Activated CD8-positive, alpha-beta memory T cell treated with anti-CD3 and anti-CD28 coated beads, Interleukin-2, amount 10 ng/mL, durations not matched to agents 7 days and 5 days (primary cell): ENCODE measurements at regions of chr6 and their contacts with region 1.

Region 1: GRCh38 chr6:43263314-43264178 is 20.3 kb downstream of the TTBK1 start:
- DNase-seq: peak; percentile 85
- ATAC-seq: peak; percentile 96
- H3K4me3 Mint-ChIP-seq: no peak overlapping the region
- H3K27ac Mint-ChIP-seq: no peak overlapping the region
- H3K4me1 Mint-ChIP-seq: no peaks in the 10 kb centered on the region
- H3K27me3 Mint-ChIP-seq: peaks cover 10% of the 10 kb centered on the region

Region 2: GRCh38 chr6:43355862-43356590 is 92.5 kb after region 1 on chr6:
- CTCF ChIA-PET with region 1: interaction called, 10 read pairs
- DNase-seq: no peak
- ATAC-seq: no peak
- H3K4me3 Mint-ChIP-seq: no peak overlapping the region
- H3K27ac Mint-ChIP-seq: no peak overlapping the region
- H3K4me1 Mint-ChIP-seq: peaks cover 2% of the 10 kb centered on the region
- H3K27me3 Mint-ChIP-seq: no peaks in the 10 kb centered on the region

Region 3: DNA sequence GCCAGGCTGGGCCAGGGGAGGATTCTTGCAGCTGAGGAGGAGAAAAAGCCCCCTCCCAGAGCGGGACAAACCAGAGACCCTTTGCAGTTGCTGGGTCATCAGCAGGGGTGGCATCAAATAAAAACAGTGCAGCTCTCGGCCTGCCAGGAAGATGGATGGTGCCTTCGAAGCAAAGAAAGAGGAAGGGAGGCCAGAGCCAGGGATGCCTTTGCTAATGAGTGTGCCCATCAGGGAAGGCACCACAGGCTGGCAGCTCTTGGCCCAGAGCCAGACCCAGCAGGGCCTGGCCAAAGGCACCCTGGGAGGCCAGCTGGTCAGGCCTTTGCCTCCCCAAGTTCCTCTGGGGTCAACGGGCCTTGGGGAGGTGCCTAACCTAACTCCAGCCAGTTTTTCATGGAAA is 132.2 kb after region 1 on chr6:
- CTCF ChIA-PET with region 1: interaction called, 24 read pairs
- DNase-seq: no peak
- ATAC-seq: no peak
- H3K4me3 Mint-ChIP-seq: no peak overlapping the region
- H3K27ac Mint-ChIP-seq: no peak overlapping the region
- H3K4me1 Mint-ChIP-seq: peaks cover 14% of the 10 kb centered on the region
- H3K27me3 Mint-ChIP-seq: peaks cover 41% of the 10 kb centered on the region

Region 4: DNA sequence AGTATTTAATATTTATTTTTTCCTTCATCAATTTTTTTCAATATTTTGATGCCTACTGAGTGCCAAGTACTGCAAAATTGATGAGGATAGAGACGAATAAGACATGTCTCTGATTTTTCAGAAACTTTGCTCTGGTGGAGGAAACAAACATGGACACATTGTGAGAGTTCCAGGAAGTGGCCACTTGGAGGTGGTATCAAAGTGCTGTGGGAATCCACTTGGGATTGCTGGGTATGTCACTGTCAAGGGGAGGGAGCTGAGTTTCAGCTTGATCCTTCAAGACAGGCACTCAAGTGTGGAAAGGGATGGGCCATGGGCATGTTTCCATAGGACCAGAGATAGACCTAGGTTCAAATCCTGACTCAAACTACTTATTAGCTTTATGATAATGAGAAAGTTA is 139.3 kb after region 1 on chr6:
- CTCF ChIA-PET with region 1: interaction called, 24 read pairs
- DNase-seq: no peak
- ATAC-seq: no peak
- H3K4me3 Mint-ChIP-seq: no peak overlapping the region
- H3K27ac Mint-ChIP-seq: no peak overlapping the region
- H3K4me1 Mint-ChIP-seq: peaks cover 2% of the 10 kb centered on the region
- H3K27me3 Mint-ChIP-seq: peaks cover 25% of the 10 kb centered on the region